Naive thymus-derived CD4-positive, alpha-beta T cell (primary cell): ENCODE measurements at regions of chr5 and their contacts with region 1.

Region 1: GRCh38 chr5:180209137-180209581 is at the start of gene RASGEF1C:
- DNase-seq: peak; percentile 26 to 82 (median 56)
- ATAC-seq: peak; percentile 94
- H3K4me3 ChIP-seq: no peak within 1 kb of the TSS
- H3K4me3 Mint-ChIP-seq: peak within 1 kb of the TSS; percentile 46 to 87 (median 62)
- H3K27ac ChIP-seq: no peak within 1 kb of the TSS
- H3K27ac Mint-ChIP-seq: peak within 1 kb of the TSS in 1 of 9 donors; percentile 52
- H3K4me1 ChIP-seq: no peaks in the 10 kb centered on the region
- H3K4me1 Mint-ChIP-seq: peaks cover 5 to 14% (median 9%) of the 10 kb centered on the region in 7 donors
- H3K27me3 ChIP-seq: peaks cover 0 to 7% of the 10 kb centered on the region in 2 donors
- H3K27me3 Mint-ChIP-seq: peaks cover 34 to 61% (median 48%) of the 10 kb centered on the region in 5 donors
- total RNA-seq, gene RASGEF1C: not detected

Region 2: GRCh38 chr5:180126726-180127681 is 82.2 kb before region 1 on chr5:
- CTCF ChIA-PET with region 1: no interaction called
- POLR2A ChIA-PET with region 1: no interaction called
- intact Hi-C with region 1: loop called in 1 of 2 experiments (anchors 10 kb)
- DNase-seq: peak in 5 of 9 donors; percentile 17 to 60 (median 19)
- ATAC-seq: peak; percentile 69
- H3K4me3 ChIP-seq: no peak overlapping the region
- H3K4me3 Mint-ChIP-seq: no peak overlapping the region
- H3K27ac ChIP-seq: no peak overlapping the region
- H3K27ac Mint-ChIP-seq: no peak overlapping the region
- H3K4me1 ChIP-seq: no peaks in the 10 kb centered on the region
- H3K4me1 Mint-ChIP-seq: peaks cover 0 to 3% (median 0%) of the 10 kb centered on the region in 7 donors
- H3K27me3 ChIP-seq: no peaks in the 10 kb centered on the region
- H3K27me3 Mint-ChIP-seq: peaks cover 6 to 25% (median 24%) of the 10 kb centered on the region in 5 donors

Region 3: GRCh38 chr5:180253036-180253824 is 44.1 kb after region 1 on chr5:
- CTCF ChIA-PET with region 1: no interaction called
- POLR2A ChIA-PET with region 1: no interaction called
- intact Hi-C with region 1: no loop called
- DNase-seq: no peak
- ATAC-seq: no peak
- H3K4me3 ChIP-seq: no peak overlapping the region
- H3K4me3 Mint-ChIP-seq: no peak overlapping the region
- H3K27ac ChIP-seq: no peak overlapping the region
- H3K27ac Mint-ChIP-seq: no peak overlapping the region
- H3K4me1 ChIP-seq: no peaks in the 10 kb centered on the region
- H3K4me1 Mint-ChIP-seq: peaks cover 0 to 10% (median 0%) of the 10 kb centered on the region in 7 donors
- H3K27me3 ChIP-seq: no peaks in the 10 kb centered on the region
- H3K27me3 Mint-ChIP-seq: no peaks in the 10 kb centered on the region

Region 4: GRCh38 chr5:180343831-180344327 is 134.7 kb after region 1 on chr5:
- CTCF ChIA-PET with region 1: no interaction called
- POLR2A ChIA-PET with region 1: no interaction called
- intact Hi-C with region 1: no loop called
- DNase-seq: no peak
- ATAC-seq: peak; percentile 18
- H3K4me3 ChIP-seq: no peak overlapping the region
- H3K4me3 Mint-ChIP-seq: no peak overlapping the region
- H3K27ac ChIP-seq: no peak overlapping the region
- H3K27ac Mint-ChIP-seq: no peak overlapping the region
- H3K4me1 ChIP-seq: no peaks in the 10 kb centered on the region
- H3K4me1 Mint-ChIP-seq: no peaks in the 10 kb centered on the region
- H3K27me3 ChIP-seq: no peaks in the 10 kb centered on the region
- H3K27me3 Mint-ChIP-seq: peaks cover 9 to 23% (median 14%) of the 10 kb centered on the region in 5 donors